Thyroid gland (tissue), 4 donors: ENCODE measurements at regions of chr17 and their contacts with region 1.

Region 1: DNA sequence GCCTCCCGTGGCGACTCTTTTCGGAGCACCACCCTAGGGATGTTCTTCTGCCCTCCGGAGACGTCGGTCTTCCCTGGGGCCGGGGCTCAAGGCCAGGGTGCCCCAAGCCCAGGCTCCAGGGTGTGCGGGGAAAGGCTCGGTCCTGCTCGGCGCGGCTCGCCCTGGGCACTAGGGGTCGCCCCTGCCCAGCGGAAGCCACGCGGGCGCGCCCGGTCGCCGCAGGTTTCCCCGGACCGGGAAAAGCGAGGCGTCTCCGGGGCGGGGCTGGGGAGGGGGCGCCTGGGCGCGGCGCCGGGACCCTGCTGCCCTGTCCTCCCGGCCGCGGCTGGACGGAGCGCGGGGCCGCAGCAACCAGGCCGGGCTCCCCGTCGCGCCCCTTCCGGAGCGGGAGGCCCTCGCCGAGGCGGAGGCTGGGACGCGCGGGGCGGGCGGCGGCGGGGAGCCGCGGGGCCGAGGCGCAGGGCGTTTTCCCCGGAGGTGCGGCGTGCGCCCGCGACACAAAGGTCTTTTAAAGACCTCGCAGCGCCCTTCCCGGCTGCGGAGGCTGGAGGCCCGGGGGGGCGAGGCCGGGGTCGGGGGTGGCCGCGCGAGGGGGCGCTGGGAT is 76.4 kb downstream of the MRC2 start:
- DNase-seq: peak; percentile 59 to 63
- H3K4me3 ChIP-seq: peak overlapping the region in 2 of 3 donors; percentile 21 to 54
- H3K27ac ChIP-seq: peak overlapping the region in 1 of 3 donors; percentile 41
- H3K4me1 ChIP-seq: peaks cover 0 to 12% of the 10 kb centered on the region in 2 donors
- H3K27me3 ChIP-seq: no peaks in the 10 kb centered on the region
- CTCF ChIP-seq: peak; percentile 40 to 88 (median 70)
- POLR2A ChIP-seq: no peak

Region 2: DNA sequence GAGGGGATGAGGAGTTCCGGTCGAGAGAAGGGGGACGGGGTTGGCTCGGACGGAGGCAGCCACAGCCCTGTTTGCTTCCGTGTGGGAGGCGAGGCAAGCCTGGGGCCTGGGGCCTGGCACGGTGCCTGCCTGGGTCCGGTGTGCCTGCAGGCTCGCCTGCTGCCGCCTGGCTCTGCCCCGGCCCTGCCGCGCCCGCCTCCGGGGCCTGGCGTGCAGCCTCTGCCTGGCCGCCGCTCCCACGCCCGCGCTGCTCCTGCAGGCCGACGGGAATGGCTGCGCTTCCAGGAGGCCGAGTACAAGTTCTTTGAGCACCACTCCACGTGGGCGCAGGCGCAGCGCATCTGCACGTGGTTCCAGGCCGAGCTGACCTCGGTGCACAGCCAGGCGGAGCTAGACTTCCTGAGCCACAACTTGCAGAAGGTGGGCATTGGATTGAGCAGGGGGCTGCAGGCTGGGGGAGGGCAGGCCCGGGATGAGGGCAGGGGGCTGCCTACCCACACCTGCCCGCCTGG is 23.3 kb before region 1 on chr17:
- intact Hi-C with region 1: no loop called
- DNase-seq: no peak
- H3K4me3 ChIP-seq: no peak overlapping the region
- H3K27ac ChIP-seq: no peak overlapping the region
- H3K4me1 ChIP-seq: no peaks in the 10 kb centered on the region
- H3K27me3 ChIP-seq: no peaks in the 10 kb centered on the region
- CTCF ChIP-seq: no peak
- POLR2A ChIP-seq: no peak

Region 3: DNA sequence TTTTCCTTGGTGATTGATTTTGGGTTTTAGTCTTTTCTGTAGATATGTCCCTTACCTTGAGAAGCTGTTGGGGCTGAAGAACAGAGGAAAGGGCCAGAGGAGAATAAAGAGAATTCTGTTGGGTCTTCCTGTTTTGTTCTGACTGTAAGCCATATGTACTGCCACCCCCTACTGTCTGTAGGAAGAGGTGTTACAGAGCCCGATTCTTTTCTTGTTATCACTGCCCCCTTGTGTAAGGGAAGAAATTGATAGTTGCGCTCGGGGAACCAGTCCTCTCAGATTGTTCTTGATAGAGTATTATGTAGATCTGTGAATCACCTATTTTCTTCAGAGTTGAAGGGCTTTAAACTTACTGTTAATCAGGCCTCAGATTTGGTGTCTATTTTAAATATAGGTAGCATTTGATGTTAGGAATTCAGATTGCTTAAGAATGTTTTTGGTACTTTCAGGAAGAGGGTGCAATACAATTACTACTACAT is 264.6 kb after region 1 on chr17:
- intact Hi-C with region 1: loop called (anchors 5 kb)
- DNase-seq: peak; percentile 16 to 31
- H3K4me3 ChIP-seq: no peak overlapping the region
- H3K27ac ChIP-seq: no peak overlapping the region
- H3K4me1 ChIP-seq: peaks cover 7% of the 10 kb centered on the region in 2 donors
- H3K27me3 ChIP-seq: no peaks in the 10 kb centered on the region
- CTCF ChIP-seq: peak; percentile 39 to 85 (median 67)
- POLR2A ChIP-seq: no peak

Region 4: DNA sequence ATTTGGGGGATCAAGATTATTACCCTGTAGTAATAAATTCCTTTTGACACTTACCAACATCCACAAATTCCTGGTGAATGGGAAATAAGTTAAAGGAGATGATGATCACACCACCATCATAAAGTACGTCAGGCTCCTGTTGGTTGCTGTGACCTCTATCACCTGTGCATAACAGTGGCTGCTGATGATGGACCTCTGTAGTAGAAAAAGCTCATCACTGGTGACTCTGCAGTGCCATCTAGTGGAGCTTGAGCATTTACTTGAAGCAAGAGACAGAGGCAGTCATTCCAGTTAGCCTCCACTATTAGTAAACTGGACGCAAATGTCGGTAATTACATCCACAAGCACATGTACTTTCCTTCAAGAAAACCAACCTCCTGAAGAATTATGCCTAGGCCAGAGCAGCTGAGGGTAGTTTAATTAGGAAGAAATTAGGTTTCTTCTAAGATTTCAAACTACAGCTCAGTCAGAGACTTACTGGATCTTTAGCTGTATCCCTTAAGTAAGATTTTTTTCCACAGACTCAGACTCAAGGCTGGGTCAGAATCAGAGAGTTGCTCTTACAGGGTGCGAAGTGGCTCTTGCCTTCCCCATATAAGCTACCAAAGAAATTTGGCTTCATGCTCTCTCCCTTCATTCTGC is 702.9 kb after region 1 on chr17:
- intact Hi-C with region 1: loop called (anchors 2 kb)
- DNase-seq: peak; percentile 69 to 78
- H3K4me3 ChIP-seq: no peak overlapping the region
- H3K27ac ChIP-seq: no peak overlapping the region
- H3K4me1 ChIP-seq: no peaks in the 10 kb centered on the region
- H3K27me3 ChIP-seq: no peaks in the 10 kb centered on the region
- CTCF ChIP-seq: peak; percentile 36 to 84 (median 74)
- POLR2A ChIP-seq: no peak